Activated naive CD4-positive, alpha-beta T cell treated with anti-CD3 and anti-CD28 coated beads for 36 hours (primary cell): ENCODE measurements at regions of chr10 and their contacts with region 1.

Region 1: DNA sequence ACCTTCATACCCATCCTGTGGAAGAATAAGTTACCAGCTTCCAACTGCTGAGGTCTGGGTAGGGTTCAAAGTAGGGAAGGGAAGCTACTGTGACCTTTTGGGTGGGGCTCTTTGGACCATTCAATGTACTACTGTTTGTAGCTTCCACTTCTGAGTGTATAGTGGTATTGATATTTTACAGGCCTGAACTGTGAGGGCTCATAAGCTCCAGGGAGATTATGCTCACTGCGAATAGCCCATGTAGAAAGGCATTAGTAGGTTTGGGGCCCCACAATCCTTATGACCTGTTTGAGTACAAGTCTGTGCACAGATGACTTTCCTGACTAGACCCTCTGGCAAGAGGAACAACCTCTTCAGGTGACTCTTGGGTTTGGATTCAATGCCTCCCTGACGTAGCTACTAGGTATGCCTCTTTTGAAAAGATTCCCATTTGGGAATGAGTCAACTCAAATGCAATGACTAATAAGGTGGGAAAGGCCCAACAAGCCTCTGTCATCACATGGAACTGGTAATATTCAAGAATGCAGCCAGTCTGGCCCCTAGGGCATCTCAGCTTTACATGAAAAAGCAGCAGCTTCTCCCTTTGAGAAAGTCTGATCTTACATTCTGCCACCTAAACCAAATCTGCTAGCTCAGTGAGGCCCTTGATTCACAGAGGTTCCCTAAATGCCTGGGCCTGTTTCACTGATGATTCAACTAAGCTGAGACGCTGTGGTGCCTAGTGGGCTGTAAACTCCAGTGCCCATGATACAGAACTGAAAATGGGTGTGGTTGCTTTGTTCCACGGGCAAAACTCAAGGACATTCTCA is 79.8 kb downstream of the ABI1 start:
- DNase-seq: peak; percentile 70
- H3K4me3 Mint-ChIP-seq: no peak overlapping the region
- H3K27ac Mint-ChIP-seq: peak overlapping the region; percentile 86
- H3K4me1 Mint-ChIP-seq: peaks cover 82% of the 10 kb centered on the region
- H3K27me3 Mint-ChIP-seq: no peaks in the 10 kb centered on the region

Region 2: GRCh38 chr10:26697163-26697921 is 83.7 kb before region 1 on chr10 and contains the start of gene PDSS1:
- CTCF ChIA-PET with region 1: no interaction called
- intact Hi-C with region 1: no loop called
- DNase-seq: peak; percentile 72
- H3K4me3 Mint-ChIP-seq: peak within 1 kb of the TSS; percentile 96
- H3K27ac Mint-ChIP-seq: peak within 1 kb of the TSS; percentile 89
- H3K4me1 Mint-ChIP-seq: peaks cover 39% of the 10 kb centered on the region
- H3K27me3 Mint-ChIP-seq: no peaks in the 10 kb centered on the region
- total RNA-seq, gene PDSS1: 14.5 to 16.0 TPM

Region 3: GRCh38 chr10:26737730-26738129 is 43.3 kb before region 1 on chr10:
- CTCF ChIA-PET with region 1: interaction called, 4 read pairs
- intact Hi-C with region 1: loop called (anchors 1 kb)
- DNase-seq: peak; percentile 75
- H3K4me3 Mint-ChIP-seq: no peak overlapping the region
- H3K27ac Mint-ChIP-seq: peak overlapping the region; percentile 88
- H3K4me1 Mint-ChIP-seq: peaks cover 36% of the 10 kb centered on the region
- H3K27me3 Mint-ChIP-seq: no peaks in the 10 kb centered on the region

Region 4: DNA sequence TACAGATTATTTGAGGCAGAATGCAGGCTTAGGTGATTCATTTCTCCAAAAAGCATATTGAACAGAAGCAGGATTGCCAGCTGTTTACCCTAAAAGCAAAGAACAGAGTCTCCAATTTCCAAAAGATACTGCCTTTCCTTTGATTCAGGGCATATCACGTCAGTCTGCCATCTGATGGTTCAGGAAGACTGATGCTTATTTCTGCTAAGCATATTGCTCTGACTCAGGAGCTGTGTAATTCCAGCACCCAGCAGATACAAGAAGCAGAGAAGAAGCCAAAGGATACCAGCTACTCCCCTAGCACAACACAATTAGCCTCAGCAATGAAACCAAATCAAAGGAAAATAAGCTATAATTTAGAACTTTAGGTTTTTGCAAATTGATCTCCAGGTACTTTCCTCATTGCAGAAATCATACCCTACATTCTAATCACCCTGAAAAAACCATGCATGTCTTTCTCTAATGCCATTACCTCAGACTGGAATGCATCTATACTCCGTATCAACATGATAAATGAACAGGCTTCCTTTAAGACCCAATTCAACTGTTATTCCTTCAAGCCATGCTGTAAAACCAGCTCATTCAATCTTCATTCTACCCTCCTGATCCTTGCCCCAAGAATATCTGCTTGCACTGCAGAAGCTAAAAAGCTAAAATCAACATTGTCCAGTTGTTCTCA is 24.7 kb after region 1 on chr10:
- CTCF ChIA-PET with region 1: interaction called, 3 read pairs
- intact Hi-C with region 1: loop called (anchors 1 kb)
- DNase-seq: peak; percentile 22
- H3K4me3 Mint-ChIP-seq: no peak overlapping the region
- H3K27ac Mint-ChIP-seq: no peak overlapping the region
- H3K4me1 Mint-ChIP-seq: peaks cover 71% of the 10 kb centered on the region
- H3K27me3 Mint-ChIP-seq: no peaks in the 10 kb centered on the region

Region 5: GRCh38 chr10:27197980-27198620 is 417.1 kb after region 1 on chr10:
- CTCF ChIA-PET with region 1: no interaction called
- intact Hi-C with region 1: no loop called
- DNase-seq: no peak
- H3K4me3 Mint-ChIP-seq: no peak overlapping the region
- H3K27ac Mint-ChIP-seq: no peak overlapping the region
- H3K4me1 Mint-ChIP-seq: no peaks in the 10 kb centered on the region
- H3K27me3 Mint-ChIP-seq: no peaks in the 10 kb centered on the region